Right cardiac atrium (tissue), 5 donors: ENCODE measurements at regions of chr5 and their contacts with region 1.

Region 1: DNA sequence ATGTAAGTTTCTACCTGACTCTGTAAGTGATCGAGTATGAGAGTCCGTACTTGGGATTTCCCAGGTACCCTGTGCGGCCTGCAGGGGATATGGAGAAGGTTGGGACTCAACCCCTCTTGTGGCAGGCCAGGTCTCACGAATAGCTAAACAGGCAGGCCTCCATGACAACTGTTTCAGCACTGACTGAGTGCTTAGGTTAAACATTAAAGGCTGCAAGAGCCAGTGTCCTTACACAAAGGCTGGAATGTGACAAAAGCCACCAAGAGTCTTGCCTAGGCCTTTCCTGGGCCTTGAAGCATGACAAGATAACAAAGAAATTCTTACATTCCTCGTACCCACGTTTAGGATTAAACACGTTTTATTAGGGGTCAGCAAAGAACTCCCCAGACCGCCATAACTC is 58.6 kb downstream of the THBS4 start:
- DNase-seq: no peak
- ATAC-seq: no peak
- H3K4me3 ChIP-seq: no peak overlapping the region
- H3K27ac ChIP-seq: no peak overlapping the region
- H3K4me1 ChIP-seq: no peaks in the 10 kb centered on the region
- H3K27me3 ChIP-seq: no peaks in the 10 kb centered on the region

Region 2: DNA sequence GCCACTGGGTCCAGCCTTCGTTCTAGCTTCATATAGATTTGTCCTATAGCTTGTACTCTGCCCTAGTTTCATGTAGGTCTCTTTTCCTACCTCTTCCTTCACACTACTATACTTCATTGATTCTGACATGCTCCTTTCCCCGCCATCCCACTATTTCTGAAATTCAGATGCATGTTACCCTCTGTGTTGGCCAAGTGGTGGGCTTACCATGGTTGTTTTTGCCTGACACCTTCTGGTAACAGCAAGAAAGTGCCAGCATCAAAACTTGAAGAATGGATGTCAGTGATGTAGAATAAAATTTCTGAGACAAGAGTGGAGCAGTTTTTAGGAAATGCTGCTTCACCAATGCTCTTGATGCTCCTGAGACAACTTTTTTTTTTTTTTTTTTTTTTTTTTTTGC is 181.6 kb after region 1 on chr5:
- intact Hi-C with region 1: loop called in 3 of 4 experiments (anchors 5 to 10 kb)
- DNase-seq: no peak
- ATAC-seq: peak in 1 of 2 donors; percentile 59
- H3K4me3 ChIP-seq: no peak overlapping the region
- H3K27ac ChIP-seq: no peak overlapping the region
- H3K4me1 ChIP-seq: no peaks in the 10 kb centered on the region
- H3K27me3 ChIP-seq: no peaks in the 10 kb centered on the region

Region 3: DNA sequence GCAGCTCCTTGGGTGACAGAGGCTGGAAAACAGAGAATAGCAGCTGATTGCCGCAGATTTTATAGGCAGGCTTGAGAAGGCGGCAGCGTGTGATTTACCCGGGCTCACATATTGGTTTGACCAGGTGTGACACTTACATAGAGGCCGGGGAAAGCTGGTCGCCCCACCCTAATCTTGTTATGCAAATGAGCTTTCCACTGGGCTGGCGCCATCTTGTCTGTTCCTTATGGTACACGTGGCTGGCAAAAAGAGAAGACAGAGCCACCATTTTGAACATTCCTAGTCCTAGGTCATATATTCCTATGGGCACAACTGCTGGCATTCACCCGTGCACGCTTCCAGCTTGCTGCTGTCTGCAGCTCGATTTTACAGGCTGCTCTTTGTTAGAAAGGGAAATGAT is 214.7 kb after region 1 on chr5:
- intact Hi-C with region 1: loop called (anchors 2 to 5 kb)
- DNase-seq: no peak
- ATAC-seq: no peak
- H3K4me3 ChIP-seq: no peak overlapping the region
- H3K27ac ChIP-seq: no peak overlapping the region
- H3K4me1 ChIP-seq: no peaks in the 10 kb centered on the region
- H3K27me3 ChIP-seq: no peaks in the 10 kb centered on the region